Caco-2 (cell line): ENCODE measurements at regions of chr1 and their contacts with region 1.

Region 1: DNA sequence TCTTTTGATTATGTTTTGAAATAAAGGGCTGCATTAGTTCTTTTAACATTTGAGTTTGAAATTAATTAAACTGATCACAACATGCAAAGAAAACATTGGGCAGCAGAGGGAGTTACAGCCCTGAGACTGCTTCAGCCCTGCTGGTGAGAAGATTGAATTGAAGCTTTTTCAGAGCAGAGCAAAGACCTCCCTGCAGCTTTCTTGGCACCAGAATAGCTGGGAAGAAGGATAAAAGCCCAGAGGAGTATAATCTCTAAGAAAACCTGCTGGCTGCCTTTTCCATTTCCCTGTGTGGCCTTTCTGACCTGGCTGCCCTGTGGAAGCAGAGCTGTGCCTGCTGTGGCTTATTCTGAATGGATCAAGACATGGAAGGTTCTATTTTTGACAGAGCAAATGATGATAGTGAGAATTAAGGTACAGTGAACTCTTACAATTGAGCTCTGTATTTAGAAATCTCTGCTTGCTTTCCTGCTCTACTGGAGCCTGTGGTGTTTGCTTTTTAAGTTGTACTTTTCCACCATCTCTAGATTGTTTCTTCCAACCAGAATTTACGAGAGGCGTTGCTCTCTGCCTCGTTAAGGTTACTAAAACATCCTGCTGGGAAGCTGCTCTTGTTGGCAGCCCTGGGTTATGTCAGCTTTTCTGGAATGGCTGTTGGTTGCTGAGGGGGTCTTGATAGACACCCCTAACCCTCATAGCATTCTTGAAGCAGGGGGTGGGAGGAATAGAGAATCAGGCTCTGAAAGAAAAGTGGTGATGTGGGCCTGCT is 9.9 kb downstream of the SNRPE start:
- DNase-seq: peak; percentile 48 to 65
- H3K4me3 ChIP-seq: no peak overlapping the region
- H3K4me3 Mint-ChIP-seq: no peak overlapping the region
- H3K27ac Mint-ChIP-seq: no peak overlapping the region
- H3K4me1 ChIP-seq: no peaks in the 10 kb centered on the region
- H3K4me1 Mint-ChIP-seq: peaks cover 7% of the 10 kb centered on the region
- H3K27me3 ChIP-seq: no peaks in the 10 kb centered on the region
- H3K27me3 Mint-ChIP-seq: no peaks in the 10 kb centered on the region
- CTCF ChIP-seq: peak; percentile 90 to 96

Region 2: GRCh38 chr1:203769505-203770343 is 101.6 kb before region 1 on chr1:
- CTCF ChIA-PET with region 1: no interaction called
- POLR2A ChIA-PET with region 1: no interaction called
- intact Hi-C with region 1: no loop called
- DNase-seq: peak; percentile 28 to 43
- H3K4me3 ChIP-seq: no peak overlapping the region
- H3K4me3 Mint-ChIP-seq: no peak overlapping the region
- H3K27ac Mint-ChIP-seq: peak overlapping the region; percentile 46
- H3K4me1 ChIP-seq: no peaks in the 10 kb centered on the region; the same call in 1 of the 2 replicates
- H3K4me1 Mint-ChIP-seq: peaks cover 9% of the 10 kb centered on the region
- H3K27me3 ChIP-seq: no peaks in the 10 kb centered on the region
- H3K27me3 Mint-ChIP-seq: no peaks in the 10 kb centered on the region
- CTCF ChIP-seq: no peak

Region 3: DNA sequence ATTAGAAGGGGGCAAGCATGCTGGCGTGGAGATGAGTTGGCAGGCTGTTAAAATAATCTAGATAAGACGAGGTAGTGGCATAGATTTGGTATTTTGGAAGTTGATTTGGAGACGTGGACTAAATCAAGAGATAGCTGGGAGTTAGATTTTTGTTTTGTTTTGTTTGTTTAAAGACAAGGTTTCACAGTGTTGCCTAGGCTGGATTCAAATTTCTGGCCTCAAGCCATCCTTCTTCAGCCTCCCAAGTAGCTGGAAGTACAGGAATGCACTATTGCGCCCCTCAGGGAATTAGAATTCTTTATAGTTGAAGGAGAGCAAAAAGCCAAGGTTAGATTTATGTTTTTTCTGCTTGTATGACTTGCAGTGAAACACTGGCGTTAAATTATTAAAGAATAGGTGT is 32.2 kb before region 1 on chr1:
- CTCF ChIA-PET with region 1: no interaction called
- POLR2A ChIA-PET with region 1: no interaction called
- intact Hi-C with region 1: no loop called
- DNase-seq: no peak
- H3K4me3 ChIP-seq: no peak overlapping the region
- H3K4me3 Mint-ChIP-seq: no peak overlapping the region
- H3K27ac Mint-ChIP-seq: peak overlapping the region; percentile 75
- H3K4me1 ChIP-seq: no peaks in the 10 kb centered on the region
- H3K4me1 Mint-ChIP-seq: no peaks in the 10 kb centered on the region
- H3K27me3 ChIP-seq: no peaks in the 10 kb centered on the region
- H3K27me3 Mint-ChIP-seq: no peaks in the 10 kb centered on the region
- CTCF ChIP-seq: no peak

Region 4: GRCh38 chr1:204072931-204073836 is 201.9 kb after region 1 on chr1 and contains the start of gene SOX13:
- CTCF ChIA-PET with region 1: interaction called, 7 read pairs
- POLR2A ChIA-PET with region 1: no interaction called
- intact Hi-C with region 1: loop called (anchors 1 kb)
- DNase-seq: peak; percentile 86 to 88
- H3K4me3 ChIP-seq: peak within 1 kb of the TSS; percentile 96
- H3K4me3 Mint-ChIP-seq: peak within 1 kb of the TSS; percentile 90
- H3K27ac Mint-ChIP-seq: peak within 1 kb of the TSS; percentile 74
- H3K4me1 ChIP-seq: peaks cover 15% of the 10 kb centered on the region
- H3K4me1 Mint-ChIP-seq: peaks cover 20% of the 10 kb centered on the region
- H3K27me3 ChIP-seq: no peaks in the 10 kb centered on the region
- H3K27me3 Mint-ChIP-seq: no peaks in the 10 kb centered on the region
- CTCF ChIP-seq: peak in 1 of 2 experiments; percentile 24
- total RNA-seq, gene SOX13: 31.5 and 34.5 TPM in 2 replicates